SK-N-SH (cell line): ENCODE measurements at regions of chr7 and their contacts with region 1.

Region 1: DNA sequence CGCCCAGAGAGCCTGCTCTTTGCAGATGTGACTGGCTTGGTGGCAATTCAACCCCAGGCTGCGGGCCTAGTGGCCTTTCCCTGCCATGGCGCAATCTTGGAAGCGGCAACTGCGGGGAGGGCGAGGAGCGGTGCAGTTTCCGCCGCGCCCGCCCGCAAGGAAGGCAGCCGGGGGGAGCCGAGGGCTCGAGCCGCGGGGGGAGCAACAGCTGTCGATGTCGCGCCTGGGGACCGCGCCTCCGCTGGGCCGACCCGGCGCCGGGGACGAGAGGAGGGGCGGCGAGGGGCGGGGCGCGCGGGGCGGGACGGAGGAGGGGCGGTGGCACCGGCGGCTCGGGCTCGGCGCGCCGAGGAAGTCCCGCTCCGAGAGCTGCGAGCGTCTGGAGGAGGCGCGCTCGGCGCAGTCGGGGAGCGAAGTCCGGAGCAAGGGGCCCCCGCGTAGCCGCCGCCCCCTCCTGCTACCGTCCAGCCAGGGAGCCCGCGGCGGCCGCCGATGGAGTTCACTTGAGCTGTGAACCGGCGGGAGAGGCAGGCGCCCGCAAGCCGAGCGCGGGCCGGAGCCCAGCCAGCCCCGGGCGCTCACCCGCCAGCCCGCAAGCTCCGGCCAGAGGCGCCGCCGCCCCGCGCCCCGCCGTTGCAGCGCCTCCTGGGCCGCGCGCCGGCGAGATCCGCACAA is 438.1 kb upstream of the GALNT17 start:
- DNase-seq: peak; percentile 96
- H3K4me3 ChIP-seq: peak overlapping the region; percentile 79 to 97
- H3K27ac ChIP-seq: peak overlapping the region in 1 of 2 experiments; percentile 87; a peak in 2 of 4 replicates
- H3K4me1 ChIP-seq: peaks cover 9 to 30% of the 10 kb centered on the region in 2 experiments; a peak in 3 of 4 replicates
- H3K27me3 ChIP-seq: no peaks in the 10 kb centered on the region
- CTCF ChIP-seq: peak; percentile 42
- EP300 ChIP-seq: no peak; a peak in 2 of 4 replicates
- RAD21 ChIP-seq: no peak

Region 2: DNA sequence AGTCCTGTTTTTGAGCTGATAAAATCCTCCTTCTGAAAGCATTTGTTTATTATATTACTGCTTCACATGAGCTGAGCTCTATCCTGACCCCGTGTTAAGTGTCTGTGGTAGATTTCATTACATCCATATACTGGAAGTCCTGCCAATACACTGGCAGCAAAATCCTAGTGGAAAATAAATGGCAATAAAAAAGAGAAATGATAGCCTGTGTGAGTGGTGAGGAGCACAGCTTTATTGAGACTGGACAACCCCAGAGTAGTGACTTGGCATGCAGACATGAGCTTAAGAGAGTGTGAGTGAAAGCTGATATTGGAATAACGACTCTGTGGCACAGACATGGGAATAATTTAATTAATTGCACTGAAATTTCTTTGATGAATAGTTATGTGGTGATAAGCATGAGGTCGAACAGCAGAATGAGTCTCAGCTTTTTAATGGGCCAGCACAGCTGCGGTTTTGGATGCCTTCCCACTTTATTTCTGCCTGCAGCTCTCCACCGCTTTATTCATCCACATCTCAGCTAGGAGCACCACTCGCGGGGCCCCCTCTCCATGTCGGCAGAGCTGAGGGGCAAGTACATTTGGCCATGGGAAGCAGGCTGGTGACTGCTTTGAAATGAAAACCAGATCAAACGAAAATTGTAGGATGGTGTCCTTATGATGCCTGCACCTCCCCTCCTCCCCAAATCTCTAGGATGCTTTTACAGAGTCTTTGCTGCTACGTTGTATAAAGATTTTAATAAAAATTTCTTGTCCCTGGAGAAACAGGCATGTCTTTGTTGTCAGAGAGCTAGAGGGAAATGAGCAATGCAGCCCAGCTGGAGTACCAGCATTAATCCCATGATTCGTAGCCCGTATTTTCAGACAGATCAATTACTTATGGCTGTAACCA is 601.3 kb before region 1 on chr7:
- CTCF ChIA-PET with region 1: interaction called, 10 read pairs
- POLR2A ChIA-PET with region 1: no interaction called
- DNase-seq: peak; percentile 70
- H3K4me3 ChIP-seq: peak overlapping the region; percentile 25 to 37
- H3K27ac ChIP-seq: peak overlapping the region; percentile 64 to 73
- H3K4me1 ChIP-seq: peaks cover 21 to 34% of the 10 kb centered on the region in 2 experiments
- H3K27me3 ChIP-seq: no peaks in the 10 kb centered on the region
- CTCF ChIP-seq: no peak
- EP300 ChIP-seq: peak; percentile 82 to 85
- RAD21 ChIP-seq: no peak; the same call in none of the 2 replicates

Region 3: GRCh38 chr7:70506434-70506833 is 187.4 kb before region 1 on chr7:
- CTCF ChIA-PET with region 1: interaction called, 88 read pairs
- POLR2A ChIA-PET with region 1: interaction called, 3 read pairs
- DNase-seq: peak; percentile 82
- H3K4me3 ChIP-seq: no peak overlapping the region
- H3K27ac ChIP-seq: peak overlapping the region in 1 of 2 experiments; percentile 77; a peak in 2 of 4 replicates
- H3K4me1 ChIP-seq: peaks cover 0 to 23% of the 10 kb centered on the region in 2 experiments; a peak in 1 of 4 replicates
- H3K27me3 ChIP-seq: no peaks in the 10 kb centered on the region
- CTCF ChIP-seq: peak; percentile 40
- EP300 ChIP-seq: peak in 1 of 2 experiments; percentile 90; a peak in 2 of 4 replicates
- RAD21 ChIP-seq: peak; percentile 98

Region 4: DNA sequence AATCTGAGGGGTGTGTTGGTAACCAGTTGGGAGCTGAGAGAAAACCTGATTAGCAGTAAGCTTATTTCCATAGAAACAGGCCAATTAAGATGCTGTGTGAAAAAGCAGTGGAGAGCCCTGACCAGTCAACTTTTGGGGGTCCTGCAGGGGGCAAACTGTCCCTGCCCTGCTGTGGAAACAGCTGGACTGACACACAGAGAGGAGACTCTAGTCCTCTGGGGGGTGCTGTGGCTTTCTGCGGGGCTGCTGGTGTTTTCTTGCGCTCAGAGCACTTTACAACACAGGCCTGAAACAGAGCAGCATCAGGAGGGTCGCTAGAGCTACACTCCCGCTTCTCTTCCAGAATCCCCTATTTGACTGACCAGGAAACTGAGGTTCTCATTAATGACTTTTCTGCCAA is 108.8 kb before region 1 on chr7:
- CTCF ChIA-PET with region 1: interaction called, 100 read pairs
- POLR2A ChIA-PET with region 1: interaction called, 10 read pairs
- DNase-seq: peak; percentile 66
- H3K4me3 ChIP-seq: no peak overlapping the region
- H3K27ac ChIP-seq: peak overlapping the region in 1 of 2 experiments; percentile 94; a peak in 2 of 4 replicates
- H3K4me1 ChIP-seq: peaks cover 0 to 33% of the 10 kb centered on the region in 2 experiments; a peak in 2 of 4 replicates
- H3K27me3 ChIP-seq: no peaks in the 10 kb centered on the region
- CTCF ChIP-seq: peak; percentile 29
- EP300 ChIP-seq: no peak
- RAD21 ChIP-seq: peak; percentile 66

Region 5: GRCh38 chr7:70712942-70713341 is 19.1 kb after region 1 on chr7:
- CTCF ChIA-PET with region 1: interaction called, 40 read pairs
- POLR2A ChIA-PET with region 1: no interaction called
- DNase-seq: no peak
- H3K4me3 ChIP-seq: no peak overlapping the region
- H3K27ac ChIP-seq: no peak overlapping the region
- H3K4me1 ChIP-seq: peaks cover 19 to 24% of the 10 kb centered on the region in 2 experiments; a peak in 3 of 4 replicates
- H3K27me3 ChIP-seq: no peaks in the 10 kb centered on the region
- CTCF ChIP-seq: no peak
- EP300 ChIP-seq: no peak
- RAD21 ChIP-seq: no peak